Panc1 (cell line): ENCODE measurements at regions of chr2 and their contacts with region 1.

Region 1: GRCh38 chr2:65402323-65402722 is 30.1 kb downstream of the SPRED2 start:
- DNase-seq: no peak
- ATAC-seq: no peak; the same call in 1 of the 2 replicates
- H3K4me3 ChIP-seq: no peak overlapping the region
- H3K27ac ChIP-seq: no peak overlapping the region
- H3K4me1 ChIP-seq: peaks cover 41% of the 10 kb centered on the region
- H3K27me3 ChIP-seq: no peaks in the 10 kb centered on the region
- CTCF ChIP-seq: no peak

Region 2: DNA sequence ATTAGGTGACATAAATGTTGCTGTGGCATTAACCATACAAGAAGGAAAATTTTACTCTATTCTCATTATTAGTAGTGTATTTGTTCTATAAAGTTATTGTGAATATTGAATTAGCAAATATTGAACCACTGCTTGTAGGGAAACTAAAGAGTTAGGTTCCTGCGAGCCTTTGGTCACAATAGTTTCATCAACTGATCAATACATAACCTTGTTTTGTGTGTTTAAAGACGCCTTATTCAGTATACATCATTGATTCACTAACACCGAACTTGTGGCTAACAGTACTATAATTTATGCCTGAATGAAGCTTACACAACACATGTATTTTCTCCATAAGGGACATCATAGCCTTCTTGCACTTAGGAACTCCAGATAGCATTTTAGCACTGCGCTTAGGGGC is 1420.0 kb before region 1 on chr2:
- CTCF ChIA-PET with region 1: interaction called, 12 read pairs
- POLR2A ChIA-PET with region 1: no interaction called
- in situ Hi-C with region 1: no loop called
- intact Hi-C with region 1: no loop called
- DNase-seq: no peak
- ATAC-seq: no peak
- H3K4me3 ChIP-seq: no peak overlapping the region
- H3K27ac ChIP-seq: no peak overlapping the region
- H3K4me1 ChIP-seq: 0 out of 2 replicates have a peak, but pooled peaks cover 3% of the 10 kb centered on the region
- H3K27me3 ChIP-seq: no peaks in the 10 kb centered on the region
- CTCF ChIP-seq: no peak

Region 3: DNA sequence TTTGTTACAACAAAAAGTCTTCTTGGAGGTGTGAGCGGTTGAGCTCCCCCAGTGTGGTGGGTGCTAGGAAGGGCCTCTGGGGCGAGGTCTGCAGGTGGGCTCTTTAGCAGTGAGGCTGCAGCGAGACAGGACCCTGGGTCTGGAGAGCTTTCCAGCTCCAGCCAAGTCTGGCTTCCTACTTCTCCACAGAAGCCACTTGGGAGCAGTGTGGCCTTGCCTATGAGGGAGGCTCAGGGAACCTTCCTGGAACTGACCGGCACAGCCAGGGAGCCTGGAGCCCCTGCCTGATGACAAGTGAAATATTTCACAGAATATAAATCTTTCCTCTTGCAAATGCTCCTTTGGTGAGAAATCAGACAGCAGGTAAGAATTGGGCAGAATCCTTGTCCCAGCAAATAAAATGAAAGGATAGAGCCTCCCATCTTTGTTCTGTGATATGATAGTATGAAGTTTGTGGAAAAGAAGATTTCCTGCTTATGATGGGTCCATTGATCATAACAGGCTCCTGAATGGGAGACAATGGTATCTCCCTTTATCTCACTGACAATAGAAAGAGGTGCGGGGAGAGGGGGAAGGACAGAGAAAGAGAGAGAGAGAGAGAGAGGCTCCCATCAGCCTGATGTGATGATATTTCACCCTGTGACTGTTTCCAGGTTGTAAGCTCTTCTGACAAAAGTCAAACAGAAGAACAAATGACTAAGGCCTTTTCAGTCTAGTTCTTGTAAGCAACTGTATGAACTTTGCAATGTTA is 319.9 kb after region 1 on chr2:
- CTCF ChIA-PET with region 1: no interaction called
- POLR2A ChIA-PET with region 1: no interaction called
- in situ Hi-C with region 1: no loop called
- intact Hi-C with region 1: no loop called
- DNase-seq: no peak
- ATAC-seq: peak; percentile 88
- H3K4me3 ChIP-seq: no peak overlapping the region
- H3K27ac ChIP-seq: no peak overlapping the region
- H3K4me1 ChIP-seq: no peaks in the 10 kb centered on the region
- H3K27me3 ChIP-seq: no peaks in the 10 kb centered on the region
- CTCF ChIP-seq: peak; percentile 40